BJ (cell line): ENCODE measurements at regions of chr19 and their contacts with region 1.

Region 1: DNA sequence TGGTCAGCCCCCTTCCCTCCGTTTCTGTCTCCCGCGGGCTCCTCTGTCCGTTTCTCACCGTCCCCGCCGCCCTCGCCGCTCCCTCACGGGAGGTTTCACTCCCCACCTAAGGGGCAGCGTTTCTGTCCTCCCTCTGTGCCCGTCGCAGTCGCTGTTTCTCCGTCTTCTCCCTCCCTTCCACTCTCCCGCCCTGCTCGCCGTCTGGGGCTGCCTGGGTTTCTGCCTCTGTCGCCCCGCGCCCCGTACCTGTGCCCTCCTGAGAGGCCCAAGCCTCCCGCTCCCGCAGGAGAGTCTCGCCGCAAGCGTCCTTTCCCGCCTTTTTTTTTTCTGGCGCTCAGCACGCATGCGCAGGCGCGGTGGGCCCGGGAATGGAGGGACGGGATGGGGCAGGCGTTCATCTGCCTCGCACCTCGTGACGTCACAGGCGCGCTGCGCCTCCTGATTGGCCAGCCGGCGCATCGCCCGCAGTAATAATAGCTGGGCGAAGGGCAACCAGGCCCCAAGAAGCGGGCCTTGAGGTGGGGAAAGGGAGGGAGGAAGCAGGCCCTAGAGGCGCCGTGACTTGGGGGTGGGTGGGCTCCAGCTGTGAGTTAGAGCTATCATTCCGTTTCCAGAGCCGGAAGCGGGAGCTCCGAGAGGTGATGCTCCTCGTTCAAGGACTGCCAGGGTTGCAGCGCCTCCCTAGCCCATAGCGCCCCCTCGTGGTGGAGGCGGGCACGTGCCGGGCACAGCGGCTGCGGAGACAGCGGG is 15.4 kb downstream of the SSC5D start:
- DNase-seq: peak; percentile 31
- H3K4me3 ChIP-seq: peak overlapping the region; percentile 45
- H3K27me3 ChIP-seq: no peaks in the 10 kb centered on the region
- CTCF ChIP-seq: peak; percentile 98

Region 2: GRCh38 chr19:55418185-55418584 is 85.5 kb before region 1 on chr19:
- CTCF ChIA-PET with region 1: interaction called, 15 read pairs
- POLR2A ChIA-PET with region 1: no interaction called
- DNase-seq: peak; percentile 37
- H3K4me3 ChIP-seq: no peak overlapping the region
- H3K27me3 ChIP-seq: no peaks in the 10 kb centered on the region
- CTCF ChIP-seq: peak; percentile 81

Region 3: GRCh38 chr19:55460670-55461258 is 42.9 kb before region 1 on chr19:
- CTCF ChIA-PET with region 1: interaction called, 100 read pairs
- POLR2A ChIA-PET with region 1: no interaction called
- DNase-seq: peak; percentile 34
- H3K4me3 ChIP-seq: peak overlapping the region; percentile 67
- H3K27me3 ChIP-seq: no peaks in the 10 kb centered on the region
- CTCF ChIP-seq: no peak

Region 4: DNA sequence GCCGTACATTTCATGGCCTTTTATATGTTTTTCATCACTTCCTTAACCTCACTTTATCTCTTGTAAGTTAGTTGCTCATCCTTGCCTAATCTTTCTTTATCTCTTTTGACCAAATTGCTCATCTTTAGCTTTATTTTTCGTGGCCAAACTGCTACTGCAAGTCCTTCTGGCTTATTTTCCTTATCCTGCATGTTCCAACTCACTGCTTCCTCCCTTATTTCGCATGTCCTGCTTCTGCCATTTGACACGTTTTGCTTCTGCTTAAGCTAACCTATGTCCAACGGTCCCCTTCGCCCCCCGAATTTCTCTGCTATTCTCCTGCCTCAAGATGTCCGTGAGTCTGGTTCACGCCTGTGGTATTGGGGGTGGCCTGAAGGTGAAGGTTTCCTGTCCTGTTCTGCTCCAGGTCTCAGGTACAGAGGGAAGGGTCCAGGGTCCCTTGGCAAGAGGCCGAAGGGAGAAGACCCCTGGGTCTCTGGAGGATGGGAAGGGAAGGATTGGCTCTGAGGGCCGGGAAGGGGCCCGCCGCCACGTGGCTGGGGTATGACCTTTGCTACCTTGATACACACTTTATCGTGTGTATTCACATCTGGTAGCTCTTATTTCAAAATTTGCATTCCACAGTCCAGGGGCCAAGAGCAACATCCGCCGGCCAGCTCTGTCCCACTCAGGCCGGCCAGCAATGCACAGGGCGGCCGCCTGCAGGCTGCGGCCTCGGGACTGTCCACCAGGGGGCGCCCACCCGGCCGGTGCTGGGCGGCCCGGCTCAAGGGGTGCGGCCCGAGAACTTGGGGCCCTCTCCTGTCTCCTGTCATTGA is 36.2 kb before region 1 on chr19:
- CTCF ChIA-PET with region 1: interaction called, 100 read pairs
- POLR2A ChIA-PET with region 1: interaction called, 4 read pairs
- DNase-seq: no peak
- H3K4me3 ChIP-seq: no peak overlapping the region
- H3K27me3 ChIP-seq: no peaks in the 10 kb centered on the region
- CTCF ChIP-seq: peak; percentile 82

Region 5: GRCh38 chr19:55476100-55476775 is 27.4 kb before region 1 on chr19 and contains the start of gene ZNF628:
- CTCF ChIA-PET with region 1: interaction called, 35 read pairs
- POLR2A ChIA-PET with region 1: no interaction called
- DNase-seq: peak; percentile 74
- H3K4me3 ChIP-seq: peak within 1 kb of the TSS; percentile 58
- H3K27me3 ChIP-seq: no peaks in the 10 kb centered on the region
- CTCF ChIP-seq: no peak
- polyA plus RNA-seq, gene ZNF628: 0.36 and 0.48 TPM in 2 replicates

Region 6: GRCh38 chr19:55484593-55485438 is 18.9 kb before region 1 on chr19 and contains the start of gene NAT14:
- CTCF ChIA-PET with region 1: interaction called, 106 read pairs
- POLR2A ChIA-PET with region 1: no interaction called
- DNase-seq: no peak
- H3K4me3 ChIP-seq: peak within 1 kb of the TSS; percentile 82
- H3K27me3 ChIP-seq: no peaks in the 10 kb centered on the region
- CTCF ChIP-seq: no peak
- polyA plus RNA-seq, gene NAT14: 20.4 and 34.8 TPM in 2 replicates

Region 7: GRCh38 chr19:55516878-55517620 is 13.4 kb after region 1 on chr19:
- CTCF ChIA-PET with region 1: interaction called, 28 read pairs
- POLR2A ChIA-PET with region 1: no interaction called
- DNase-seq: no peak
- H3K4me3 ChIP-seq: peak overlapping the region; percentile 34
- H3K27me3 ChIP-seq: no peaks in the 10 kb centered on the region
- CTCF ChIP-seq: peak; percentile 98